WTC11 (cell line): ENCODE measurements at regions of chr1 and their contacts with region 1.

Region 1: DNA sequence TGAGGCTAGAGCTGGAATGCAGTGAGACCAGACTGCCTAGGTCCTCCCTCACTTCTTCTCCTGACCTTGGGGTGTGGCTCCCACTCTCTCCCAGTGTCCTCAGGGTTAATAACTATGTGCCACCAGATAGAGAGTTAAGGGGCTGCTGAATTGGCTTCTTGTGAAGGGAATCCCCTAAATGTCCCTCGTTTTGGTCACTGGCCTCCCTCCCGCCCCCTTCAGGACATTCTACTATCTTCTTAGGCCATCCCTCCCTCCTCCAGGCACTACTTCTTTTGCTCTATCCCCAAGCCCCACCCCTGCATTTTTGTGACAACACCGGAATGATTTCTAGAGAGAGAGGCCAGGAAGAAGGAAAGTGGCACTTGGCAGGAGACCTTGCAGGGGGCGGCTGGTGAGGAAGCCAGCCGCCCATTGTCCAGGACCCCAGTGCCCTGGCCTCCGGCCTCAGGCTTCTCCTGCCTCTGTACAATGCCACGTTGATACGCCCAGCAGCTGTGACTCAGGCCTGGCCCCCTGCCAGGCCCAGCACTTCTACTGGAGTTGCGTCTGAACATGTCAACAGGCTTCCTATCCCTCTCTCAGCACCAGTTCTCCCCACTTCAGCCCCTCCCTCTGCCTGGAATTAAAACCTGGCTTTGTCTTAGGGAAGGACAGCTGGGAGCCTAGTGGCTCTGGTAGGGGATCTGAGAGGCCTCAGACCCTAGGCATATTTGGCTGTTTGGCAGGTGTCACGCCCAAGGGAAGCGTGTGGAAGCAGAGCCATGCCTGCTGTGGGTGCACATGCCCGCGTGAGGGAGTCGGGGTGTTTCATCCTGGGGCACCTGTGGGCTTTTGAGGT is 9.1 kb downstream of the LMNA start:
- DNase-seq: peak; percentile 68
- ATAC-seq: peak; percentile 56
- H3K4me3 Mint-ChIP-seq: peak overlapping the region; percentile 42
- H3K27ac Mint-ChIP-seq: peak overlapping the region; percentile 73
- H3K4me1 Mint-ChIP-seq: peaks cover 57% of the 10 kb centered on the region
- H3K27me3 Mint-ChIP-seq: no peaks in the 10 kb centered on the region
- CTCF ChIP-seq: peak; percentile 16; the same call in 1 of the 2 replicates

Region 2: GRCh38 chr1:155437405-155437804 is 686.2 kb before region 1 on chr1:
- CTCF ChIA-PET with region 1: no interaction called
- POLR2A ChIA-PET with region 1: interaction called, 12 read pairs
- DNase-seq: no peak
- ATAC-seq: no peak
- H3K4me3 Mint-ChIP-seq: no peak overlapping the region
- H3K27ac Mint-ChIP-seq: no peak overlapping the region
- H3K4me1 Mint-ChIP-seq: peaks cover 12% of the 10 kb centered on the region
- H3K27me3 Mint-ChIP-seq: no peaks in the 10 kb centered on the region
- CTCF ChIP-seq: no peak

Region 3: GRCh38 chr1:156033011-156033410 is 90.6 kb before region 1 on chr1:
- CTCF ChIA-PET with region 1: no interaction called
- POLR2A ChIA-PET with region 1: no interaction called
- DNase-seq: no peak
- ATAC-seq: no peak
- H3K4me3 Mint-ChIP-seq: no peak overlapping the region
- H3K27ac Mint-ChIP-seq: no peak overlapping the region
- H3K4me1 Mint-ChIP-seq: no peaks in the 10 kb centered on the region
- H3K27me3 Mint-ChIP-seq: no peaks in the 10 kb centered on the region
- CTCF ChIP-seq: no peak

Region 4: GRCh38 chr1:156276966-156277381 is 153.4 kb after region 1 on chr1:
- CTCF ChIA-PET with region 1: no interaction called
- POLR2A ChIA-PET with region 1: no interaction called
- DNase-seq: no peak
- ATAC-seq: no peak
- H3K4me3 Mint-ChIP-seq: no peak overlapping the region
- H3K27ac Mint-ChIP-seq: no peak overlapping the region
- H3K4me1 Mint-ChIP-seq: peaks cover 9% of the 10 kb centered on the region
- H3K27me3 Mint-ChIP-seq: no peaks in the 10 kb centered on the region
- CTCF ChIP-seq: no peak